Panc1 (cell line): ENCODE measurements at regions of chr20 and their contacts with region 1.

Region 1: DNA sequence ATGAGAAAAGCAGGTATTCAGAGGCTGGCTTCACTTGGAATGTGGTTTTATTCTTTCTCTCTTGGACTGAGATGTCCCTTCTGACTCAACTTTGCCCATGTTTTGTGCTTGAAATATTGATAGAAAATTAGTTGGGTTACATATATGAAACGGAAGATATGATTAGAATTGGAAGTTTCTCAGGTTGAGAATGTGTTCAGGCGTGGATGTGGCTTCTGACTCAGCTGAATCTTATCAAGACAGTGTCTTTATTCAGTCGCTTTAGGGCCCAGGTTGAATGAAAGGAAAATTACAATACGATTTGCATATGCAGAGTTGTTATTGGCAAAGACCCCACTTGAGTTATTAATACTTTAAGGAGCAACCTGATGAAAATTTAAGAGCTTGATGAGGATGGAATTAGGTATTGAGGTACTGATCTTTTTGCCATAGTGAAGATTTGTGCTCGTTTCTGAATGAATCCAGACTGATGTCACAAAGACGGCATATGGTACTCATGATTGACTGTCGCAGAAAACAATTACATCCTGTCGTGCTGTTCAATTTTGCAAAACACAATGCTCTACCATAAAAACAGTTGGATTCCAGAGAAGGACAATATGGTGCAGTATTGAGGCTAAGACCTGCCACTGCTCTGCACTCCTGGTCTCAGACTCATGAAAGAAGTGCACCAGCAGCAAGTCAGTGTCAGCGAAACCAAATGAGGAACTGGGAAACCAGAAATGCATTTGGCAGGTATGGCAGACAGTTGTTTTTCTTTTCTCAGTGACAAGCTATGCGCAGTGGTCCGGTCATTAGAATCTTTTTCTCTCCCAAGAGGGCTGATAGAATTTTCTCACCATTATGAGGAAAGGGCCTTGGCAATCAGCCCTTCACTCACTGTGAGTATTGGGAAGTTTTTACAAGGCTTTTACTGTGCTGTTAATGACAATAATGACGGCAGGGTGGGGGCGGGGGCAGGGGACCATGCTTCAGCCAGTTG is 158.3 kb downstream of the DOK5 start:
- DNase-seq: no peak
- ATAC-seq: no peak
- H3K4me3 ChIP-seq: no peak overlapping the region
- H3K27ac ChIP-seq: no peak overlapping the region
- H3K4me1 ChIP-seq: no peaks in the 10 kb centered on the region
- H3K27me3 ChIP-seq: peaks cover 5% of the 10 kb centered on the region; the same call in 1 of the 2 replicates
- CTCF ChIP-seq: no peak

Region 2: DNA sequence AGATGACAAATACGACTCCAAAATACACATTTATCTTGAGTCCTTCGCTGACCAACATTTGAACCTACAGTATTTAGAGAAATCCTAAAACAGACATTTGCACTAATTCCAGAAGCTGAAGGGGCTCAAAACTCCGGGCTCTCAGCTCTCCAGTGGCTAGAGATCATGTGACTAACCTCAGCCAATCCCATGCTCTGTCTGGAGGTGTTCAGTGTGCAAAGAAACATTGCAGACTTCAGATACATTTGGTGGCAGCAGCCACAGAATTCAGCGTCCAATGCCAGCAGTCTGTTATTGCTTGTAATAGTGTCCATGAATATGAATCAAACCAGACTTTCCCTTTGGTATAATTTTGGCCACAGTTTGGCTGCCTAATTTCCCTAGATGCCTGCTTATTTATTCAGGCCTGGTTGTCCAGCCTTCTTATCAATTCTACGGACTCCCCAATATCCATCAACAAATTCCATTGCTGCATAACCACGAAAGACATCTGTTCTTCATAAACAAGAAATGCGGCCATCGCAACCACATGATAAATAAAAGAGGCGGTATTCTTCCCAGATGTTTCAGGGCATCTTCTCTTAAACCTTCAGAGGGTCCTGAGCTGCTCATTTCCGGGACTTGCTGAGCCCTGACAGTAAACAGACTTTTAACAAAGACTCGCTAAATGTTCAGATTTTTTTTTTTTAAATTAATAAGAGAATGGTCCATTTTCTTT is 445.4 kb before region 1 on chr20:
- CTCF ChIA-PET with region 1: no interaction called
- POLR2A ChIA-PET with region 1: interaction called, 10 read pairs
- in situ Hi-C with region 1: no loop called
- intact Hi-C with region 1: no loop called
- DNase-seq: no peak
- ATAC-seq: no peak
- H3K4me3 ChIP-seq: no peak overlapping the region
- H3K27ac ChIP-seq: no peak overlapping the region
- H3K4me1 ChIP-seq: no peaks in the 10 kb centered on the region
- H3K27me3 ChIP-seq: no peaks in the 10 kb centered on the region; the same call in 1 of the 2 replicates
- CTCF ChIP-seq: no peak